ENCODE measurements at regions of chr13 and their contacts with region 1.

Region 1: GRCh38 chr13:106536244-106537034 is 977 bp upstream of the EFNB2 start:
- DNase-seq: peak; percentile 30
- ATAC-seq: peak; percentile 76
- H3K4me3 ChIP-seq: peak overlapping the region; percentile 74
- H3K27ac ChIP-seq: no peak overlapping the region
- H3K4me1 ChIP-seq: peaks cover 3% of the 10 kb centered on the region; the same call in 1 of the 2 replicates
- H3K27me3 ChIP-seq: peaks cover 0 to 17% of the 10 kb centered on the region in 2 experiments; a peak in 2 of 4 replicates
- CTCF ChIP-seq: peak; percentile 97 to 99 (median 98); a peak in 5 of 6 replicates
- EP300 ChIP-seq: no peak
- POLR2A ChIP-seq: 0 out of 2 replicates have a peak, but pooled peaks have one; percentile 24
- RAD21 ChIP-seq: peak; percentile 93

Region 2: DNA sequence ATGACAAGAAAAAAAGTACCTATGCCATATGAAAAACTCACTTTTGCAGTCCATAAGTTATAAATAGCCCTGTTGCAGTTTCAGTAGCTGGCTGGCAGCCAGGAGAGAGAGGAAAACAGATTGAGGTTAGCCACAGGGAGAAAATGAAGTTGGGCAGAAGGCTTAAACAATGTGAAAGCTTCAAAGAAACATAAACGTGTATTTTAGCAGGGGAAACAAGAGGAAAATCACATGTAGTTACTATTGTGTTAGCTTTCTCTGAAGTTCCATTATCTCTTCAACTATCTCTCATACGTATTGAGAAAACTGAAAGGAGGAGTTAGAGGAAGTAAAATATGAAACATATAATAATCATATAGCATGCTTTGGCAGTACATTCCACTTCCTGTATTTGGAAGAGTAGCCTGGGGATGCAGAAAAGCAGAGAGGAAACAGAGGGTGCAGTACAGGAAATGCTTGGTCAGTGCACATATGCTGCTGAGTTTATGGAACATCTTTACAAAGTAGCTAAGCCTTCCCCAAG is 1552.1 kb before region 1 on chr13:
- CTCF ChIA-PET with region 1: no interaction called
- POLR2A ChIA-PET with region 1: no interaction called
- RAD21 ChIA-PET with region 1: no interaction called
- SMC1A ChIA-PET with region 1: no interaction called
- in situ Hi-C with region 1: loop called (anchors 25 kb)
- intact Hi-C with region 1: no loop called
- DNase-seq: peak; percentile 92
- ATAC-seq: peak; percentile 87
- H3K4me3 ChIP-seq: peak overlapping the region; percentile 15; the same call in 1 of the 2 replicates
- H3K27ac ChIP-seq: peak overlapping the region; percentile 77
- H3K4me1 ChIP-seq: peaks cover 24% of the 10 kb centered on the region
- H3K27me3 ChIP-seq: no peaks in the 10 kb centered on the region
- CTCF ChIP-seq: no peak
- EP300 ChIP-seq: peak in 1 of 2 experiments; percentile 49; a peak in 1 of 4 replicates
- POLR2A ChIP-seq: no peak
- RAD21 ChIP-seq: no peak

Region 3: GRCh38 chr13:106083620-106084350 is 452.7 kb before region 1 on chr13:
- CTCF ChIA-PET with region 1: interaction called, 40 read pairs
- POLR2A ChIA-PET with region 1: no interaction called
- RAD21 ChIA-PET with region 1: interaction called, 11 read pairs
- SMC1A ChIA-PET with region 1: interaction called, 12 read pairs
- in situ Hi-C with region 1: loop called (anchors 5 kb)
- intact Hi-C with region 1: loop called (anchors 1 kb)
- DNase-seq: no peak
- ATAC-seq: peak; percentile 93
- H3K4me3 ChIP-seq: no peak overlapping the region
- H3K27ac ChIP-seq: no peak overlapping the region
- H3K4me1 ChIP-seq: no peaks in the 10 kb centered on the region
- H3K27me3 ChIP-seq: no peaks in the 10 kb centered on the region
- CTCF ChIP-seq: peak; percentile 45 to 85 (median 62); a peak in 5 of 6 replicates
- EP300 ChIP-seq: no peak
- POLR2A ChIP-seq: no peak
- RAD21 ChIP-seq: peak; percentile 76

Region 4: DNA sequence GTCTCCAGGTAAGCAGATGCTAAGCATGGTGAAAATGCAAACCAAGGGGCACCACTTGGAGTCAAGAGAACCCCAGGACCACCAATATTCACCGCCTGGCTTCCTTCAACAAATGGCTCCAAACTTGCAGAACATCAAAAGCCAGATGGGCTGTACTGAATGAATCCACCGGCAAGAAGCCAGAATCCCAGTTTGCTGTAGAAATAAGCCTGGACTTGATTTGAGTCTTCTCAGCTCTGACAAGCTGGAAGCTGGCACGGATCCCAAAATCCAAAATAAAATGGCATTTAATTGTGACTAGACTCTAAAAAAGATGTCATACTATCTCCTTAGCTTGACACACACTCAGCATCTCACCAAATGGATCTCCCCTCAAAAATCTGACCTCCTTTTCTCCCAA is 12.9 kb before region 1 on chr13:
- CTCF ChIA-PET with region 1: interaction called, 10 read pairs
- POLR2A ChIA-PET with region 1: no interaction called
- RAD21 ChIA-PET with region 1: interaction called, 5 read pairs
- SMC1A ChIA-PET with region 1: interaction called, 7 read pairs
- in situ Hi-C with region 1: no loop called
- intact Hi-C with region 1: no loop called
- DNase-seq: no peak
- ATAC-seq: no peak
- H3K4me3 ChIP-seq: no peak overlapping the region
- H3K27ac ChIP-seq: no peak overlapping the region
- H3K4me1 ChIP-seq: no peaks in the 10 kb centered on the region
- H3K27me3 ChIP-seq: peaks cover 0 to 2% of the 10 kb centered on the region in 2 experiments; a peak in 1 of 4 replicates
- CTCF ChIP-seq: no peak
- EP300 ChIP-seq: no peak
- POLR2A ChIP-seq: no peak
- RAD21 ChIP-seq: no peak

Region 5: DNA sequence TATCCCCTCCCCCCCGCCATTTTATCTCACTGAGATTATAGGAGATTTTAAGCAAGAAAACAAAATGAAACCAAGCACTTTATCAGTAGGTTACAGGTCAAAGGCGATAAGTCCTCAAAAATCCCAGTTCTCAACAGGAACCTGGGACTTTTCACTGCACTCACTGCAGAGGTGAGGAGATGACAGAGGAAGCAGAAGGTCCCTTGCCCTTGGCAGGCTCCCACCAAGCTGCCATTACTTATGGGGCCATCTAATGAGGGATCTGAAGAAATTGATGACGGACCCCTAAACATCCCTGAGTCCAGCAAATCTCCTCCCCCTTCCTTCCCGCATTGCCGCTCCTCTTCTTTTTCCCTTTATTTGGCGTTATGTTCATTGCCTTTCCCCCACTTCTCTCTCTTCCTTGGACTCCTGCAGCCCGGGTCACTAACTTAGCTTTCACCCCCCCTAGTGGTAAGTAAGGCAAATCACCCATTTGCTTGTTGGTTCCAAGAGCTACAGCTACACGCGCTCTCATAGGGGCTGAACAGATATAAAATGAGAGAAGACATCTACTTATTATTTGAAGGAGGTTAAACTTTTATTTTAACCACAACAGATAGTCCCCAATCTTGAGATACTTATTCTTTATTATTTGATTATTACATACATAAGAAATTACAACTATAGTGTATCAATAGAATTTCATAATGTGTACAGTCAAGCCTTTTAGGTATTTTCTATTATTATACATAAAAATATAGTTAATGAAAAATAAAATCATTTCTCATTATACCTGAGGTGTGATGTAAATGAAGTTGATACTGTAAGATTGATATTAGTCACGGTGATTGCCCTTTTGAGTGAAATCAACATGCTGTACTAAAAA is 83.5 kb after region 1 on chr13:
- CTCF ChIA-PET with region 1: interaction called, 13 read pairs
- POLR2A ChIA-PET with region 1: no interaction called
- RAD21 ChIA-PET with region 1: interaction called, 5 read pairs
- SMC1A ChIA-PET with region 1: interaction called, 7 read pairs
- in situ Hi-C with region 1: no loop called
- intact Hi-C with region 1: no loop called
- DNase-seq: peak; percentile 2
- ATAC-seq: peak; percentile 99
- H3K4me3 ChIP-seq: no peak overlapping the region
- H3K27ac ChIP-seq: no peak overlapping the region
- H3K4me1 ChIP-seq: no peaks in the 10 kb centered on the region
- H3K27me3 ChIP-seq: peaks cover 0 to 2% of the 10 kb centered on the region in 2 experiments; a peak in 1 of 4 replicates
- CTCF ChIP-seq: peak; percentile 77 to 86 (median 79)
- EP300 ChIP-seq: no peak
- POLR2A ChIP-seq: no peak
- RAD21 ChIP-seq: peak; percentile 88

Region 6: GRCh38 chr13:106680796-106681472 is 144.5 kb after region 1 on chr13:
- CTCF ChIA-PET with region 1: no interaction called
- POLR2A ChIA-PET with region 1: no interaction called
- RAD21 ChIA-PET with region 1: no interaction called
- SMC1A ChIA-PET with region 1: no interaction called
- in situ Hi-C with region 1: no loop called
- intact Hi-C with region 1: no loop called
- DNase-seq: no peak
- ATAC-seq: no peak
- H3K4me3 ChIP-seq: no peak overlapping the region
- H3K27ac ChIP-seq: no peak overlapping the region
- H3K4me1 ChIP-seq: no peaks in the 10 kb centered on the region
- H3K27me3 ChIP-seq: no peaks in the 10 kb centered on the region; a peak in 1 of 4 replicates
- CTCF ChIP-seq: no peak
- EP300 ChIP-seq: no peak
- POLR2A ChIP-seq: no peak
- RAD21 ChIP-seq: no peak

Measured in GM12878 (cell line).